ENCODE measurements at regions of chr1 and their contacts with region 1.

Region 1: DNA sequence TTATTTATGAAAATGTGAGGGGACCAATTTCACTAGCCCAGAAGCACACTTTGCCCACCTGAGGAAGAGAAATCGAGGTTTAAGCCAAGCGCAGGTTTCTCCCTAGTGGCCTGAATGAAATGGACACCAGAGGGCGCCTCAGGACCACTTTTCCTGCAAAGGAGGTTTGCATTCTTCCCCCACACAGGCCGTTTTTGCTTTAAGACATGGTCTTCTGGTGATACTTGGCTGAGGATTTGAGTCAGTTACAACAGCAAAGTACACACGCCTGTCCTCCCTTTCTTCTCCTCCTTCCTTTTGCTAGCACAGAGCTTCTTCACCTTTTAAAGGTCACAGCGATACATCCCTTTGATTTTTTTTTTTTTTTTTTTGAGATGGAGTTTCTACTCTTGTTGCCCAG is 5.4 kb downstream of the PLA2G2E start:
- DNase-seq: peak; percentile 82
- ATAC-seq: peak; percentile 77

Region 2: DNA sequence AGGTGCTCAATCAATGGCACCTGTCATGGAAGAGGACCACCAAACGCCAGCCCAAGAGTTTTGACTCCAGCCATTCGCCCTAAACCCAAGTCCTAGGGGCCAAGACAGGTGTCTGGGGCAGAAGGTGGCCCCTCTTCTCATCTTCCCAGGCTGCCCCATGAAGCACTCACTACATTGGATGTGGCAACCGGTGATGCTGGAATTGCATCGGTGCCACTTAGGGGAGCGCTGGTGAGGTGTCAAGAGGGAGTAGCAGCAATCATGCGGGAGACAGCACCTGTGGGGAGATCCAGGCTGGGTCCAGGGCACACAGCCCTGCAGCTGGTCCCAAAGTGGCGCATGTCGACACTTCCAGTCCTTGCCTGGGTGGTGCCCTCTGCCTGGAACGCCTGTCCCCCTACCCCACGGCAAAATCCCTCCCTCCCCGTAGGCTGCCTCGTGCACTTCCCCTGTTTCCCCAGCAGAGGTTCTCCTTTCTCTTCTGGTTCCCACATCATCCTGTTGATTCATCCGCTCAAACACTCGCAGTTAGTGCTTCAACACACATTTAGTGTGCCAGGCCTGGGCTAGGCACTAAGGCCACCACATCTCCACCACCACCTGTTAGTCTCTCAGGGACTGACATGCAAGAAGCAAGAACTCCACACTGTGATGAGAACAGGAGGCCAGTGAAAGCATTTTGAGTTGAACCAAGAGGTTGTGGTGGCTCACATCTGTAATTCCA is 182.7 kb after region 1 on chr1:
- intact Hi-C with region 1: loop called (anchors 1 kb)
- DNase-seq: no peak
- ATAC-seq: peak; percentile 80

Region 3: DNA sequence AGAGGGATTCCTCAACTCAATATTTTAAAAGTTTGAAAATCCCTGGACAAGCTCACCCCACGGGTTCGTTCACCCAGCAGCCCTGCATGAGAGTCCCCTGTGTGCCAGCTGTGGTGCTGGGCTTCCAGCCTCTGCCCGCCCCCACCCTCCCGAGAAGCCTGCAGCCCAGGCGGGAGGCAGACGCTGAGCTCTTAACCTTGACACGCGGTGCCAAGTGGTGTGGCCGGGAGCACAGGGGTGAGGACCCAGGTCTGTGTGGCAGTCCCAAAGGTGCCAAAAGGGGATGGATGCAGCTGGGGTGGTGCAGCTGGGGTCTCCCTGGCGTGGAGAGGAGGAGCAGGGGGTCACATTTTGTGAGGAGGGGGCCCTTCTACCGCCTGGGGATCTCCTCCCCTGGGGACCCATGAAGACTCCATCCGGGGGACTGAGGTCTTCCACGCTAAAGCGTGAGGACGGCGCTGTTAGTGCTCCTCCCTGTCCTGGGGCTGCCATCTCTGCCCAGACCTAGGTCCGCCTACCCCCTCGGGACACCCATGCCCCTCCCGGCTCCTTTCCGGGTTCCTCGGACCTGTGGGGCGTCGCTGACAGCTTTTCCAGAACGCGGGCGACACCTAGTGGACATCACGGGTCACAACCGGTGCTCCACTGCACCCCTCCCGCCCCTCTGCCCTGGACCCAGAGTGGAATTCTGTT is 234.0 kb after region 1 on chr1:
- intact Hi-C with region 1: loop called (anchors 1 kb)
- DNase-seq: peak; percentile 92
- ATAC-seq: peak; percentile 92

Region 4: GRCh38 chr1:20194757-20195461 is 276.9 kb after region 1 on chr1:
- intact Hi-C with region 1: loop called (anchors 2 kb)
- DNase-seq: peak; percentile 80
- ATAC-seq: peak; percentile 83

Region 5: DNA sequence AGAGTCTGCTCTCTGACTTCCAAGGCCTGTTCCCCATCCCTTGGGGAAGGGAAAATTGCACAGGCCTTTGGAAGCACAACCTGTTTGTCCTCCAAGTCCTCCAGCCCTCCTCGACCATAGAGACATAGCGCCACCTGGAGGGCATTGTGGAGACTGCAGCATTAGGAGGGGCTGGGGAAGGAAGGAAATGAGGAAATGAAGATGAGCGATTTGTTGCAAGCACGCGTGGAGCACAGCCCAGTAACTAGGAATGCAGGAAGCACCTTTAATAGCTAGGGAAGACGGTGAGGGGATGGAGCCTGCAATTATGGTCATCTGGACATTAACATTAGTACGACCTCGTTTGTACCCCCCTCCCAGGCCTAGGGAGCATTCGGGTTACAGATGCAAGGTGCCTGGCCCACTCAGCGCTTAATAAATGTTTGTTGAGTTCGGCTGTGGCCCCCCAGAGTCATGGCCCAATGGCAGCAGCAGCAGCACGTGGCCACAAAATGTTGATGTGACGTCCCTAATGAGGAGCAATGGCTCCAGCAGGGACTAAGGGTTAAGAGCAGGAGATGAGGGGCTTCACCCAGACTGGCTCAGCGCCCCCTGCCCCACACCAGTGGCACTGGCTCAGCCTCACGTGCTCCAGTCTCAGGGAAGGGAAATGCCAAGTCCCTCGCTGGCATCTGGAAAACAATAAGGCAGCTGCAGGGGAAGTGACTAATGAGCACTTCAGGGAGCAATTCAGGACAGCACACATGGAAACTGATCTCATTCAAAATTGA is 576.0 kb after region 1 on chr1:
- intact Hi-C with region 1: loop called (anchors 2 kb)
- DNase-seq: peak; percentile 90
- ATAC-seq: peak; percentile 94

Measured in Right ventricle myocardium inferior (tissue), 1 donor.